ENCODE measurements at regions of chr7 and their contacts with region 1.

Region 1: GRCh38 chr7:111855161-111855856 is 293.0 kb upstream of the IMMP2L start:
- DNase-seq: peak; percentile 79
- ATAC-seq: peak; percentile 97
- H3K4me3 ChIP-seq: no peak overlapping the region
- H3K27ac ChIP-seq: no peak overlapping the region
- H3K4me1 ChIP-seq: no peaks in the 10 kb centered on the region
- H3K27me3 ChIP-seq: no peaks in the 10 kb centered on the region
- CTCF ChIP-seq: peak; percentile 67
- POLR2A ChIP-seq: no peak
- RAD21 ChIP-seq: peak; percentile 68

Region 2: GRCh38 chr7:111312964-111313363 is 542.3 kb before region 1 on chr7:
- CTCF ChIA-PET with region 1: no interaction called
- POLR2A ChIA-PET with region 1: no interaction called
- dilution Hi-C with region 1: no loop called
- in situ Hi-C with region 1: no loop called
- intact Hi-C with region 1: no loop called
- DNase-seq: peak; percentile 18
- ATAC-seq: no peak; the same call in 1 of the 2 replicates
- H3K4me3 ChIP-seq: no peak overlapping the region
- H3K27ac ChIP-seq: no peak overlapping the region
- H3K4me1 ChIP-seq: no peaks in the 10 kb centered on the region
- H3K27me3 ChIP-seq: no peaks in the 10 kb centered on the region
- CTCF ChIP-seq: no peak
- POLR2A ChIP-seq: no peak
- RAD21 ChIP-seq: peak; percentile 11; the same call in 1 of the 2 replicates

Region 3: DNA sequence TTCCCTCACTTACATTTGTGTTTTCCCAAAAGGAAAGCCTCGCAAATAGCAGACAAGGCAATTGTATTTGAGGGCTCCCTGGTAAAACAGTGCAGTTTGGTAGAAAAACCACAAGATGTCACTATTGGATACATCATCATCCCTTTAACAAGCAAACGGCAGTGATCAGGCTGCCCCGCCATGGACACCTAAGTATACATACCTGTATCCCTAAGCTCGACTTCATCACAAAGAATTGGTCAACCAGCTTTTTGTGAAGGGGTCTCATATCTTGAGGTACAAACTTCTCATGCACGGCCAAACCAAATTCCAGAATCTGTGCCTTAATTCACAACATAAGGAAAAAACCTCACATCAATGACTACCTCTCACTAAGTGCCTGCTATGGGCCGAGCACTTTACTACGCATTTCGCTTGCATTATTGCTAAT is 113.5 kb before region 1 on chr7:
- CTCF ChIA-PET with region 1: interaction called, 5 read pairs
- POLR2A ChIA-PET with region 1: no interaction called
- dilution Hi-C with region 1: no loop called
- in situ Hi-C with region 1: no loop called
- intact Hi-C with region 1: loop called (anchors 1 kb)
- DNase-seq: peak; percentile 76
- ATAC-seq: peak; percentile 89
- H3K4me3 ChIP-seq: no peak overlapping the region
- H3K27ac ChIP-seq: no peak overlapping the region
- H3K4me1 ChIP-seq: peaks cover 2% of the 10 kb centered on the region; the same call in 1 of the 2 replicates
- H3K27me3 ChIP-seq: no peaks in the 10 kb centered on the region
- CTCF ChIP-seq: peak; percentile 80
- POLR2A ChIP-seq: no peak
- RAD21 ChIP-seq: peak; percentile 83

Region 4: DNA sequence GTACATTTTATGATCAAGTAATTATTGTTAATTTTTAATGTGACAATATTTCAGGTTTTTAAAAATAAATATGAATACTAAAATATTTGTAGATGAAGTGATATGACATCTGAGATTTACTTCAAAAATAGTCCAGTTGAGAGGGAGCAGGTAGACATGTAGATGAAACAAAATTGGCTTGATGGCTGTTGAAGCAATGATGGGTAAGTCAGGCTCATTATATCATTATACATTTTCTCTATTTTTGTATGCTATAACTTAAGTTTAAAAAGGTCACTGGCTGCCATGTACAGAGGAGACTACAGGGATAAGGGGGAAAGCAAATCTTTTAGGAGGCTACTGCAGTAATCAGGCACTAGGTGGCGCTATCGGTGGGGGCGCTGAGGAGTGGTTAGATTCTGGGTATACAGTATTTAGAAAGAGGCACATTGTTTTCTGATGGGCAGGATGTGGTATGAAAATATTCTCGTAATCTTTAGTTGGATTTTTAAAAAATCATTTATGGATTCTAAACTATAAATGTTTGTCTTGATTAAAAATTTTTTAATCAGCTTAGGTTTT is 103.2 kb before region 1 on chr7:
- CTCF ChIA-PET with region 1: interaction called, 13 read pairs
- POLR2A ChIA-PET with region 1: no interaction called
- dilution Hi-C with region 1: no loop called
- in situ Hi-C with region 1: no loop called
- intact Hi-C with region 1: loop called (anchors 1 kb)
- DNase-seq: peak; percentile 44
- ATAC-seq: peak; percentile 67
- H3K4me3 ChIP-seq: no peak overlapping the region
- H3K27ac ChIP-seq: no peak overlapping the region
- H3K4me1 ChIP-seq: peaks cover 2% of the 10 kb centered on the region; the same call in 1 of the 2 replicates
- H3K27me3 ChIP-seq: no peaks in the 10 kb centered on the region
- CTCF ChIP-seq: peak; percentile 80
- POLR2A ChIP-seq: no peak
- RAD21 ChIP-seq: peak; percentile 75

Region 5: GRCh38 chr7:111763221-111763801 is 92.0 kb before region 1 on chr7:
- CTCF ChIA-PET with region 1: interaction called, 17 read pairs
- POLR2A ChIA-PET with region 1: interaction called, 9 read pairs
- dilution Hi-C with region 1: no loop called
- in situ Hi-C with region 1: loop called (anchors 5 kb)
- intact Hi-C with region 1: loop called (anchors 1 kb)
- DNase-seq: peak; percentile 71
- ATAC-seq: peak; percentile 92
- H3K4me3 ChIP-seq: no peak overlapping the region
- H3K27ac ChIP-seq: no peak overlapping the region
- H3K4me1 ChIP-seq: peaks cover 2% of the 10 kb centered on the region; the same call in 1 of the 2 replicates
- H3K27me3 ChIP-seq: no peaks in the 10 kb centered on the region
- CTCF ChIP-seq: peak; percentile 77
- POLR2A ChIP-seq: no peak
- RAD21 ChIP-seq: peak; percentile 78